ENCODE measurements at regions of chr1 and their contacts with region 1.

Region 1: GRCh38 chr1:200620273-200621131 is at the start of gene KIF14:
- DNase-seq: peak; percentile 97
- H3K4me3 Mint-ChIP-seq: peak within 1 kb of the TSS; percentile 92
- H3K27ac Mint-ChIP-seq: peak within 1 kb of the TSS; percentile 94
- H3K4me1 Mint-ChIP-seq: peaks cover 67% of the 10 kb centered on the region
- H3K27me3 Mint-ChIP-seq: no peaks in the 10 kb centered on the region
- total RNA-seq, gene KIF14: 31.6 to 34.6 TPM

Region 2: GRCh38 chr1:200602632-200603031 is 17.9 kb before region 1 on chr1:
- CTCF ChIA-PET with region 1: no interaction called
- POLR2A ChIA-PET with region 1: no interaction called
- DNase-seq: no peak
- H3K4me3 Mint-ChIP-seq: no peak overlapping the region
- H3K27ac Mint-ChIP-seq: no peak overlapping the region
- H3K4me1 Mint-ChIP-seq: no peaks in the 10 kb centered on the region
- H3K27me3 Mint-ChIP-seq: no peaks in the 10 kb centered on the region

Region 3: GRCh38 chr1:200802865-200803512 is 182.5 kb after region 1 on chr1:
- CTCF ChIA-PET with region 1: interaction called, 10 read pairs
- POLR2A ChIA-PET with region 1: no interaction called
- DNase-seq: peak; percentile 81
- H3K4me3 Mint-ChIP-seq: no peak overlapping the region
- H3K27ac Mint-ChIP-seq: no peak overlapping the region
- H3K4me1 Mint-ChIP-seq: no peaks in the 10 kb centered on the region
- H3K27me3 Mint-ChIP-seq: peaks cover 6% of the 10 kb centered on the region